Heart left ventricle (tissue), 16 donors: ENCODE measurements at regions of chr17 and their contacts with region 1.

Region 1: DNA sequence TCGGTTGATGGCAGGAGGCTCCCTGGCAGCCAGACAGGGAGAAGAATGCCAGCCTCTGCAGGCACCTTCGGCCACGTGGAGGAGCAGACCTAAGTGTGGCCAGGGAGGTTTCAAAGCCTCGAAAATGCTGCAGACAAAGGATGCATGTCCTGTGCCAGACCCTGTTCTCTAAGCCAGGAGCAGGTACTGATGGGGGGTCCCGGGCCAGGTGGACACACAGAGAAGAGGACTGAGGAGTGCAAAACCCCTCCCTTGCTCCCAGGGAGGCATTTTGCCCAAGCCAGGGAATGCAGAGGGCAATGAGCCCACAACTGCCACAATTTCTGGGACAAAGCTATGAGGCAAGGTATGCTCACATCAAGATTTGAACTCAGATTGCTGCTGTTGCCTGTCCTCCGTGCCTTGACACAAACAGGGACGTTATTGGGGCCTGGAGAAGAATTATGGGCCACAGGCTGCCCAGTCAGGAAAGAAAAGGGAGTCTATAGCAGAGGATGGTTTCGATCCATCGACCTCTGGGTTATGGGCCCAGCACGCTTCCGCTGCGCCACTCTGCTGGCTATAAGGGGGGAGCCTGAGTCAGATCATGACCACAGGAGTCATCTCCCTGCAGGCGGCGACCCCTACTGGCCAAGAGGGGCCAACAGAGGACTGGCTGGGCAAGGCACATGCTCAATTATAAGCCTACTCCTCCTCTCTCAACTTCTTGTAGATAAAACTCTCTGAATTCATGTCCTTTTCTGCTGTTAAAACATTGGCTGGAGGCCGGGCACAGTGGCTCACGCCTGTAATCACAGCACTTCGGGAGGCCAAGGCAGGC is 25.1 kb upstream of the FOXK2 start:
- DNase-seq: peak; percentile 85 to 92 (median 90)
- ATAC-seq: peak; percentile 82 to 91 (median 86)
- H3K4me3 ChIP-seq: peak overlapping the region in 5 of 12 donors; percentile 7 to 28 (median 10)
- H3K27ac ChIP-seq: peak overlapping the region in 9 of 12 donors; percentile 20 to 60 (median 47)
- H3K4me1 ChIP-seq: peaks cover under 1 to 38% (median 15%) of the 10 kb centered on the region in 12 donors
- H3K27me3 ChIP-seq: no peaks in the 10 kb centered on the region
- CTCF ChIP-seq: peak; percentile 82 to 96 (median 90)
- POLR2A ChIP-seq: peak in 1 of 2 donors; percentile 35

Region 2: GRCh38 chr17:82351716-82352488 is 142.5 kb before region 1 on chr17:
- intact Hi-C with region 1: loop called in 1 of 10 experiments (anchors 5 kb)
- DNase-seq: peak; percentile 79 to 88 (median 85)
- ATAC-seq: peak; percentile 49 to 91 (median 87)
- H3K4me3 ChIP-seq: no peak overlapping the region
- H3K27ac ChIP-seq: no peak overlapping the region
- H3K4me1 ChIP-seq: peaks cover 0 to 14% (median 3%) of the 10 kb centered on the region in 12 donors
- H3K27me3 ChIP-seq: peaks cover 0 to 11% (median 0%) of the 10 kb centered on the region in 9 donors
- CTCF ChIP-seq: peak; percentile 92 to 99 (median 97)
- POLR2A ChIP-seq: no peak

Region 3: GRCh38 chr17:82418001-82418986 is 76.2 kb before region 1 on chr17 and contains the starts of genes HEXD and OGFOD3:
- intact Hi-C with region 1: loop called in 1 of 10 experiments (anchors 5 kb)
- DNase-seq: peak; percentile 80 to 91 (median 88)
- ATAC-seq: peak; percentile 69 to 97 (median 90)
- H3K4me3 ChIP-seq: peak within 1 kb of the TSS; percentile 65 to 98 (median 82)
- H3K27ac ChIP-seq: peak within 1 kb of the TSS; percentile 82 to 96 (median 92)
- H3K4me1 ChIP-seq: peaks cover 3 to 28% (median 19%) of the 10 kb centered on the region in 12 donors
- H3K27me3 ChIP-seq: no peaks in the 10 kb centered on the region
- CTCF ChIP-seq: peak in 1 of 12 donors; percentile 7
- POLR2A ChIP-seq: peak in 1 of 2 donors; percentile 66
- total RNA-seq, gene HEXD: 9.9 to 20.2 (median 15.1) TPM
- total RNA-seq, gene OGFOD3: 23.3 to 38.5 (median 31.4) TPM

Region 4: DNA sequence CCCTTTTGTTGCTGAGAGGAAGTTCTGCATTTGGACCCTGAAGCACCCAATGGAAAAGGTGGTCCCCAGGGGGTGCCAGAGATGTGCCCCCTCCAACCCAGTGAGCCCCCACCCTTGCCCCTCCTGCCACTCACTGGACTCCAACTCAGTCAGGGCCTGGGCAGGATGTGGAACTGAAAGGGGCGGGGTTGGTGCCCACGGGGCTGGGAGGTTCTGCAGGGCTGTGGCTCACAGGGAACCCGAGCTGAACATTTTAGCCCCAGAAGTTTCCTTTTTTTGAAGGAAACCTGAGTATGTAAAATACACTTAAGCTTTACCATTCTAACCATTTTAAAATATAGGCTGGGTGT is 60.3 kb before region 1 on chr17:
- intact Hi-C with region 1: no loop called
- DNase-seq: no peak
- ATAC-seq: no peak
- H3K4me3 ChIP-seq: no peak overlapping the region
- H3K27ac ChIP-seq: peak overlapping the region in 1 of 12 donors; percentile 12
- H3K4me1 ChIP-seq: peaks cover 0 to 11% (median 0%) of the 10 kb centered on the region in 12 donors
- H3K27me3 ChIP-seq: no peaks in the 10 kb centered on the region
- CTCF ChIP-seq: no peak
- POLR2A ChIP-seq: no peak

Region 5: GRCh38 chr17:82457997-82458864 is 36.2 kb before region 1 on chr17 and contains the start of gene NARF:
- intact Hi-C with region 1: loop called in 1 of 10 experiments (anchors 5 kb)
- DNase-seq: peak; percentile 97 to 99 (median 98)
- ATAC-seq: peak; percentile 99 to 100 (median 99)
- H3K4me3 ChIP-seq: peak within 1 kb of the TSS; percentile 67 to 98 (median 92)
- H3K27ac ChIP-seq: peak within 1 kb of the TSS; percentile 98 to 100 (median 100)
- H3K4me1 ChIP-seq: peaks cover 3 to 39% (median 28%) of the 10 kb centered on the region in 12 donors
- H3K27me3 ChIP-seq: no peaks in the 10 kb centered on the region
- CTCF ChIP-seq: no peak
- POLR2A ChIP-seq: peak; percentile 28 to 97
- total RNA-seq, gene NARF: 48.6 to 77.4 (median 59.5) TPM

Region 6: DNA sequence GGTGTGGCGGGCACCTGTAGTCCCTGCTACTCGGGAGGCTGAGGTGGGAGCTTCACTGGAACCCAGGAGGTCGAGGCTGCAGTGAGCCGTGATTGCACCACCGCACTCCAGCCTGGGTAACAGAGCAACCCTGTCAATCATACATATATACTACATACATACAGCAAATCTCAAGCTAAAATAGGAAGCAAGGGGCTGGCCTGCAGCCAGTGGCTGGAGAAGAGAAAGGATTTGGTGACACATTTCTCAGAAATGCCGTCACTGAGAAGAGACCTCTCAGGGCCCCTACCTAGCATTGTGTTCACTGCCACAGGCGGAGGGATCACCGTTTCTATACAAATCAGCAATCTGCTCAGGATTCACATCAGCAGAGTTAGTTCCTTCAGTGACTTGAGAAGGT is 19.0 kb before region 1 on chr17:
- intact Hi-C with region 1: no loop called
- DNase-seq: no peak
- ATAC-seq: no peak
- H3K4me3 ChIP-seq: no peak overlapping the region
- H3K27ac ChIP-seq: no peak overlapping the region
- H3K4me1 ChIP-seq: no peaks in the 10 kb centered on the region
- H3K27me3 ChIP-seq: no peaks in the 10 kb centered on the region
- CTCF ChIP-seq: no peak
- POLR2A ChIP-seq: no peak

Region 7: GRCh38 chr17:82518826-82519810 is 24.7 kb after region 1 on chr17 and contains the start of gene FOXK2:
- intact Hi-C with region 1: loop called in 2 of 10 experiments (anchors 1 to 2 kb)
- DNase-seq: peak; percentile 94 to 97 (median 96)
- ATAC-seq: peak; percentile 97 to 99 (median 98)
- H3K4me3 ChIP-seq: peak within 1 kb of the TSS; percentile 68 to 97 (median 85)
- H3K27ac ChIP-seq: peak within 1 kb of the TSS; percentile 93 to 99 (median 96)
- H3K4me1 ChIP-seq: peaks cover 0 to 44% (median 20%) of the 10 kb centered on the region in 12 donors
- H3K27me3 ChIP-seq: no peaks in the 10 kb centered on the region
- CTCF ChIP-seq: no peak
- POLR2A ChIP-seq: peak in 1 of 2 donors; percentile 65
- total RNA-seq, gene FOXK2: 26.9 to 77.0 (median 33.9) TPM

Region 8: GRCh38 chr17:82536512-82537201 is 42.2 kb after region 1 on chr17:
- intact Hi-C with region 1: loop called in 2 of 10 experiments (anchors 5 to 10 kb)
- DNase-seq: peak in 4 of 5 donors; percentile 40 to 59 (median 48)
- ATAC-seq: peak; percentile 32 to 70 (median 54)
- H3K4me3 ChIP-seq: peak overlapping the region in 7 of 12 donors; percentile 1 to 29 (median 13)
- H3K27ac ChIP-seq: peak overlapping the region; percentile 43 to 90 (median 82)
- H3K4me1 ChIP-seq: peaks cover 4 to 80% (median 52%) of the 10 kb centered on the region in 12 donors
- H3K27me3 ChIP-seq: no peaks in the 10 kb centered on the region
- CTCF ChIP-seq: no peak
- POLR2A ChIP-seq: no peak

Region 9: GRCh38 chr17:82551779-82552457 is 57.5 kb after region 1 on chr17:
- intact Hi-C with region 1: loop called in 8 of 10 experiments (anchors 2 to 10 kb)
- DNase-seq: peak; percentile 67 to 85 (median 76)
- ATAC-seq: peak; percentile 62 to 82 (median 75)
- H3K4me3 ChIP-seq: no peak overlapping the region
- H3K27ac ChIP-seq: peak overlapping the region in 8 of 12 donors; percentile 6 to 85 (median 58)
- H3K4me1 ChIP-seq: peaks cover 13 to 62% (median 50%) of the 10 kb centered on the region in 12 donors
- H3K27me3 ChIP-seq: no peaks in the 10 kb centered on the region
- CTCF ChIP-seq: peak; percentile 57 to 84 (median 74)
- POLR2A ChIP-seq: no peak